GM10248 (cell line): ENCODE measurements at regions of chr10 and their contacts with region 1.

Region 1: DNA sequence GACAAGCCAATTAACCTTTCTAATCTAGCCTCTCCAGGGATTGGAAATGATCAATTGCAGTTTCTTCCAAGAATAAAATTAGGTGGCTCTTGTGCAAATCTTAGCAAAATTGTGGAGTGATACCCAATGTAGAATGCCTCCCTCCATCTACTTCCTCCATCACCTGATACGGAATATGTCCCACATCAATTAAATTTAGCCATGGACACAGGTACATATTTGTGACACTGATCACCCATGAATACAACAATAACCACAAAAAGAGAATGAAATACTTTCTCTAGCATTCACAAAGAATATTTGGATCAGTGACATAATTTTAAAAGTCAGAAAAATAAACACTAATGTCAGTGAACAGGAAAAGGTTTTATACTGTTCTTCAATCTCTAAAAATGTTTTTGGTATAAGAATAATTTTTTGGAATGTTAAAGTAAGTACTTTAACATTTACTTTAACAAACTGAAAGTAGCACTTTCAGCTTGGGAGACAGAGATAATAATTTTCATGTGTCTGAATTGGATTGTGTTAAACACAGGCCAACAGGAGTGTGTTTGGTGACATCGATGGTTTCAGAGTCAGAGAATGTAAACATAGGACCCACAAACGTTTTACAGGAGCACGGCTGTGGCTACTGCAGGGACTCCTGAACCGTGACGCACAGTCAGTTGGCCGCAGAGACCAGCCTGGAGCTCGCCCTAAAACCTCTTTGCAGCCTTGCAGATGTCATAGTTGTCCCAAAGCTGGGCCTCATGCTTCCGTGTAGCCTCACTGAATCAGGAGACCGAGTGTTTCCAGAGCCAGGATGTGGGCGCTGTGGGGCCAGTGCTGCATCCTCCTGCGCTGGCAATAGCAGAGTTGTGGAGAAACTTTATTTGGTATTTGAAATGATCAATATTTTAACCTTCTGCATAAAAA is 7.2 kb downstream of the RBM20 start:
- DNase-seq: peak; percentile 25
- CTCF ChIP-seq: no peak

Region 2: GRCh38 chr10:110376021-110376766 is 275.1 kb before region 1 on chr10:
- CTCF ChIA-PET with region 1: no interaction called
- POLR2A ChIA-PET with region 1: no interaction called
- DNase-seq: no peak
- CTCF ChIP-seq: no peak

Region 3: GRCh38 chr10:110610308-110610774 is 41.0 kb before region 1 on chr10:
- CTCF ChIA-PET with region 1: interaction called, 12 read pairs
- POLR2A ChIA-PET with region 1: no interaction called
- DNase-seq: peak; percentile 61
- CTCF ChIP-seq: peak; percentile 69

Region 4: GRCh38 chr10:110706690-110707098 is 55.4 kb after region 1 on chr10:
- CTCF ChIA-PET with region 1: no interaction called
- POLR2A ChIA-PET with region 1: no interaction called
- DNase-seq: no peak
- CTCF ChIP-seq: no peak

Region 5: GRCh38 chr10:110725801-110726630 is 74.7 kb after region 1 on chr10:
- CTCF ChIA-PET with region 1: no interaction called
- POLR2A ChIA-PET with region 1: no interaction called
- DNase-seq: no peak
- CTCF ChIP-seq: no peak